ENCODE measurements at regions of chr18 and their contacts with region 1.

Region 1: DNA sequence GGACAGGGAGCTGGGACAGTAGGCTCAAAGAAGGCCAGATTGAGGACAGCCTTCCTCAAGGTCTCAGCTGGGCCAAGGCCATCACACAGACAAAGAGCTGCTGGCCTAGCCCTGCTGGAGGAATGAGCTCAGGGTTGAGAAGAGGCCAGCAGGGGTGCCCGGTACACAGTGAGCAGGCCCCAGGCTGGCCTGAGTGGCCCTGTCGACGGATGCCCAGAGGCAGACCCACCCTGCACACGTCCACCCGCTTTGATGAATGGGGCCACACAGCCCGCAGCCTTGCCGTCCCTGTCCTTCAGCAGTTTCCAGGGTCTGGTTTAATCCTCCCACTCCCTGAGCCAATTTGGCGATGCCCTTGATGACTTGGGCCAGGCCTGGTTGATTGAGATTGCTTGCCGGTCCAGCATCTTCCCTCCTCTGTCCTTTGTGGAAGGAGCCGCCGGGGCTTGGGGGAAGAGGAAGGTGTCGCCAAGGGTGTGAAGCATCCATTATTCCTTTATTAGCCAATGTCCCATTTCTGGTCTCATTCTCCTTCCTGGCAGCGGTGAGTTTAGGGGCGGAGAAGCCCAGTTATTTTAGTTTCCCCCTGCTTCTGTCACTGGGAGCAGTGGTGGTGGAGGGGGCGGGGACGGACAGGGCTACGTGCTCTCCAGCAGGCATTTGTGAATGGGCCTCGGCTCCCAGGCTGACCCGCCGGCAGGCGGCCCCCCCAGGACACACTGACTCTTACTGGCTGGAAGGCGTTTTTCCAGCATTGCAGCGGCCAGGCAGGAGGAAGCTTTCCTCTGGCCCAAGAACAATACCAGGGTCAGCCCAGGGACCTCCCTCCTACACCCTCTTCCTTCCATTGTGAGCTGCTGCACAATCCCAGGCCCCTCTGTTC is 141.7 kb downstream of the CTIF start:
- DNase-seq: peak; percentile 85
- ATAC-seq: peak; percentile 83

Region 2: DNA sequence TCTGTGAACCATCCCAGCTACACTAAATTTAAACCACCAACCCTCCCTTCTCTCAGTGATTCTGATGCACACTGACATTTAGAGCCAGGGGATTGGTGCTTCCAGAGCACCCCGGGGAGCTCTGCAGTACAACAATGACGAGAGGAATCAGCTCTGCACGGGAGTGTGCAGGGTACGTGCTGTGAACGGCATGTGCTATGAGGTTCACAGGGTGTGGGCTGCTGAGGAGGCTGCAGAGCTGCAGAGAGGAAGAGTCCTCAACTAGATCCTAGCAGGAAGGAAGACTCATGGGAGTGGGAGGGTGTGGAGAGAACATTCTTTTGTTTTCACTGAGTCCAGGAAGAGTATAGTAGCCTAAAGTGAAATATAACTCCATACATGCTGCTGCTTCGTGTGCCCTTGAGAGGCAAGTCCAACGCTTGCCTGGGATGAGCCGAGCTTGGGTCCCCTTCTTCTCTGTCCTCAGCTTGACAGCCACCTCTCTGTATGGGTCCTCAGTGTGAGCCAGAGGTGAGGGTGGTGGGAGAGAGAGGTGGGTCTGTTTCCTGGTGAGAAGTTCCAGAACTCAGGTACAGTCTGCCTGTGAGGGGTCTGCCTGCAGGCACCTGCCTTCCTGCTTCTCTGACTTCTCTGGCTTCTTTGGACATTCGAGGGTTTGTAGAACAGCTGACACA is 23.0 kb before region 1 on chr18:
- intact Hi-C with region 1: no loop called
- DNase-seq: no peak
- ATAC-seq: no peak

Region 3: DNA sequence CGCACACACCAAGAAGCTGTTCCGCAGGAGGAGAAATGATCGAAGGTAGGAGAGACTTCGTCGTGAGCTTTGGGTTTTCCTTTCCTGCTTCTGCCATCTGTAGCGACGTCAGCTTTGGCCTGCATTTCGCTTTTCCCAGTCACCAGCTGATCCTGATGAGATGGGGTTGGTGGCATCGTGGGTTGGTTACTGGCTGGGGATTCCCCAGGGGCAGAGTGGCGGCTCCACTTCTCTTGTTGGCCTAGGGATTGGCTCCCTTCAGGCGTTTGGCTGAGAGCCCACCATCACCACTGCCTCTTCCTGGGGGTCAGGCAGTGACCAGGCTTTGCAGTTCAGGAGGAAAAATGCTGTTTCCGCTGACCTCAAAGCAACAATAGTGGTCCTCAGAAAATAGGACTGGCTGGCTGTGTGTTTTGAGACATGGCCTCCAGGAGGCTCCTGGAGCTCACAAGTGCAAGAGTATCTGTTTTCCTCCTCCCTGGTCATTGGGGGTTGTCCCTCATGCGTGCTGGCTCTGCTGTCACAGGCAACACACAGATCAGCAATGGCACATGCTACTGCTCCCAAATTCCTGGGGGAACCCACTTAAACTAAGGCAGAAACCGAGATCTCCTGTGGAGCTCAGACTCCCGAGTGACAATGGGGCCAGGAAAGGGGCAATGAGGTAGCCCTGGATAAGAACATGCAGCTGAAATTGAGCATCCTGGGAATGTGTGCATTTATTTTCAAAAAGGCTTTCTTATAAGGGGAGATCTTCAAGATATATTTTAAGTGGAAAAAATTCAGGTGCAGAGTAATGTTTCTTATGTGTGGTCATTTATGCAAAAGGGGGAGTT is 31.3 kb after region 1 on chr18:
- intact Hi-C with region 1: loop called (anchors 2 kb)
- DNase-seq: no peak
- ATAC-seq: peak; percentile 53

Region 4: GRCh38 chr18:48749768-48750167 is 69.2 kb after region 1 on chr18:
- intact Hi-C with region 1: loop called (anchors 2 kb)
- DNase-seq: no peak
- ATAC-seq: peak; percentile 78

Region 5: GRCh38 chr18:48790226-48790874 is 109.8 kb after region 1 on chr18:
- intact Hi-C with region 1: loop called (anchors 2 kb)
- DNase-seq: peak; percentile 90
- ATAC-seq: peak; percentile 73

Region 6: DNA sequence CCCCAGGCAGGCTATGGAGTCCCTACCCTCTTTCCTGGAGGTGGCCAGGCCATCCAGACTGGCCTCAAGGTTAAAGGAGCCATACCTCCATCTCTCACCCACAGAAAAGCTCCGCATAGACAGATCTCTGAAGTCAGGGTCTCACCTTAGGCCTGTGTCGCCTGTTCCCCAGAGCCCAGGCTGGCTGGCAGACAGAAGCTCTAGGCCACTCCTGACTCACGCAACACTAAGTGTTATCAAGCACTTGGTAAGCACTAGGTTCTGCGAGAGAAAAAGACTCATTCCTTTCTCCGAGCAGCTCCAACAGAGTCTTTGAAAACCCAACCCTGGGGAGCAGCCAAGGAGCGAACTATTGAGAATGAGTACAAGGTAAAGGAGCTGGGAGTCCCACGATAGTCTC is 264.1 kb after region 1 on chr18:
- intact Hi-C with region 1: loop called (anchors 2 kb)
- DNase-seq: no peak
- ATAC-seq: no peak